ENCODE measurements at regions of chr12 and their contacts with region 1.

Region 1: GRCh38 chr12:112906712-112907414 is at the start of gene OAS1:
- DNase-seq: peak in 8 of 9 donors; percentile 24 to 49 (median 40)
- ATAC-seq: peak; percentile 83
- H3K4me3 ChIP-seq: peak within 1 kb of the TSS; percentile 68
- H3K4me3 Mint-ChIP-seq: peak within 1 kb of the TSS; percentile 87 to 99 (median 92)
- H3K27ac ChIP-seq: peak within 1 kb of the TSS; percentile 71
- H3K27ac Mint-ChIP-seq: peak within 1 kb of the TSS; percentile 84 to 99 (median 92)
- H3K4me1 ChIP-seq: peaks cover 31 to 62% of the 10 kb centered on the region in 2 donors
- H3K4me1 Mint-ChIP-seq: peaks cover 61 to 92% (median 76%) of the 10 kb centered on the region in 7 donors
- H3K27me3 ChIP-seq: no peaks in the 10 kb centered on the region
- H3K27me3 Mint-ChIP-seq: no peaks in the 10 kb centered on the region
- total RNA-seq, gene OAS1: 5.1 to 169 (median 6.1) TPM

Region 2: DNA sequence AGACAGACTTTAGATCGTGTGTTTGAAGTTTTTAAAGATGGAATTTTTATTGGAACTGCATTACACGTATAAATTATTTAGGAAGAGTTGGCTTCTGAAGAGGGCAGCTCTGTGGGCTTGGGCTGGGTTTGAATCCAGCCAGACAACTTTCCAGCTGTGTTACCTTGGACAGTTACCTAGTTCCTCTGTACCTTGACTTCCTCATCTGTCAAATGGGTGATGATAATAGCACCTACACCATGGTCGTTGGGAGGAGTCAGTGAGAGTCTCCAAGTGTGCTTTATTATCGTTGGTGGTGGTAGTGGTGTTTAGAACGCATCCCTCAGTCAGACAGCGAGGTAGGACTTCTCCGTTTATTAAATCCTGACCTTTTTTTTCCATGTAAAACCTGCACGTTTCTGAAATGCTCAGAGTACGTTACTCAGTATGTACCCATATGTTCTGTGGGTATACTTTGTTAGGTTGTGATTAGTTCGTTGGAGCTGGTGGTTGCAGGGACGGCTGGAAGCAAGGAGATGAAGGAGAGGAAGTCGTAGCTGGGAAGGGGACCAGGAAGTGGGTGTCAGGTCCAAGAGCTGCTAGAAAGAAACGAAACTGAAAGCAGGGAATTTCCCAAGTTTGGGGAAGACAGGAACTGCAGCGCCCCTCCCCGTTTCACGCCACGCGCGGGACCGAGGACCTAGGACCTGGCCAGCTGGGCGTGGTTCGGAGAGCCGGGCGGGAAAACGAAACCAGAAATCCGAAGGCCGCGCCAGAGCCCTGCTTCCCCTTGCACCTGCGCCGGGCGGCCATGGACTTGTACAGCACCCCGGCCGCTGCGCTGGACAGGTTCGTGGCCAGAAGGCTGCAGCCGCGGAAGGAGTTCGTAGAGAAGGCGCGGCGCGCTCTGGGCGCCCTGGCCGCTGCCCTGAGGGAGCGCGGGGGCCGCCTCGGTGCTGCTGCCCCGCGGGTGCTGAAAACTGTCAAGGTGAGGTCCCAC is 31.2 kb after region 1 on chr12 and contains the start of gene OAS3:
- CTCF ChIA-PET with region 1: interaction called, 3 read pairs
- POLR2A ChIA-PET with region 1: interaction called, 13 read pairs
- intact Hi-C with region 1: loop called (anchors 1 kb)
- DNase-seq: peak; percentile 31 to 79 (median 50)
- ATAC-seq: peak; percentile 84
- H3K4me3 ChIP-seq: peak within 1 kb of the TSS; percentile 78
- H3K4me3 Mint-ChIP-seq: peak within 1 kb of the TSS; percentile 85 to 100 (median 93)
- H3K27ac ChIP-seq: peak within 1 kb of the TSS; percentile 82
- H3K27ac Mint-ChIP-seq: peak within 1 kb of the TSS; percentile 90 to 97 (median 95)
- H3K4me1 ChIP-seq: peaks cover 18 to 19% of the 10 kb centered on the region in 2 donors
- H3K4me1 Mint-ChIP-seq: peaks cover 22 to 61% (median 31%) of the 10 kb centered on the region in 7 donors
- H3K27me3 ChIP-seq: no peaks in the 10 kb centered on the region
- H3K27me3 Mint-ChIP-seq: no peaks in the 10 kb centered on the region
- total RNA-seq, gene OAS3: 17.8 to 264 (median 21.6) TPM

Region 3: GRCh38 chr12:112978163-112979040 is 71.5 kb after region 1 on chr12 and contains the start of gene OAS2:
- CTCF ChIA-PET with region 1: interaction called, 10 read pairs
- POLR2A ChIA-PET with region 1: interaction called, 43 read pairs
- intact Hi-C with region 1: loop called (anchors 1 kb)
- DNase-seq: peak; percentile 35 to 89 (median 85)
- ATAC-seq: peak; percentile 97
- H3K4me3 ChIP-seq: peak within 1 kb of the TSS; percentile 99
- H3K4me3 Mint-ChIP-seq: peak within 1 kb of the TSS; percentile 87 to 100 (median 96)
- H3K27ac ChIP-seq: peak within 1 kb of the TSS; percentile 89
- H3K27ac Mint-ChIP-seq: peak within 1 kb of the TSS; percentile 97 to 100 (median 99)
- H3K4me1 ChIP-seq: peaks cover 34 to 37% of the 10 kb centered on the region in 2 donors
- H3K4me1 Mint-ChIP-seq: peaks cover 30 to 59% (median 42%) of the 10 kb centered on the region in 7 donors
- H3K27me3 ChIP-seq: no peaks in the 10 kb centered on the region
- H3K27me3 Mint-ChIP-seq: no peaks in the 10 kb centered on the region
- total RNA-seq, gene OAS2: 29.9 to 238 (median 66.0) TPM

Region 4: DNA sequence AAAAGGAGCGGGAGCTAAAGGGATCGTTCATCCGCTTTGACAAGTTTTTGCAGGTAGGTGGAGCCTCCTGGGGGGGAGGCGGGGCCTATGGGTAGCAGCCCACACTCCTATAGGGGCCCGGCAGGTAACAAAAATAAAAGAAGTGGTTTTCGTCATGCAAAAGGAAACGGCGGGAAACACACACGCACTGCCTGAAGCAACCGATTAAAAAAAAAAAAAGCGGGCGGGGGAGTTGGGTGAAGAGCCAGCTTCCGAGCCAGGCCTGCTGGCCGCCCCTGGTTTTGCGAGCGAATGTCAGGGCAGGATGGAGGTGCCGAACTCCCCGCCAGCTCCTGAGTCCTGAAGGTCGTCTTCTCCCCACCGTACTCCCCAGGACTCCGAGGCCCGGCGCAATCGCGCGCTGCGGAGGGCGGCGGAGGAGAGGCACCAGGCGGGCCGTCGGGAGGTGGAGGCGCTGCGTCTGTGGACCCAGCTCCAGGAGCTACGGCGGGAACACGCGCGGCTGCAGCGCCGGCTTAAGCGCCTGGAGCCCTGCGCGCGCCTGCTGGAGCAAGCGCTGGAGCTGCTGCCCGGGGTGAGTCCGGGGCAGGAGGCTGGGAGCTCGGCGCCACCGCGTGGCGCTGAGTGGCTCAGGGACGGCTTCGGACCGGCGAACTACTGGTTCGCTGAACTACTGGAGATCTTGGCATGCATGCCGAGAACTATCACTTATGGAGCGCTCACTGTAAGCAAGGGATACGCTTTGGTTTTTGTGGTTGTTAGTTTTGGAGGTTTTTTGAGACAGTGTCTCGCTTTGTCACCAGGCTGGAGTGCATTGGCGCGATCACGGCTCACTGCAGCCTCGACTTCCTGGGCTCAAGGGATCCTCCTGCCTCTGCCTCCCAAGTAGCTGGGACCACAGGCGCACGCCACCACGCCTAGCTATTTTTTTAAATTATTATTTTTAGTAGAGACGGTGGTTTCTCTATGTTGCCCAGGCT is 246.3 kb after region 1 on chr12:
- CTCF ChIA-PET with region 1: no interaction called
- POLR2A ChIA-PET with region 1: no interaction called
- intact Hi-C with region 1: loop called in 1 of 2 experiments (anchors 10 kb)
- DNase-seq: peak; percentile 36 to 86 (median 80)
- ATAC-seq: peak; percentile 94
- H3K4me3 ChIP-seq: peak overlapping the region; percentile 75
- H3K4me3 Mint-ChIP-seq: peak overlapping the region; percentile 76 to 88 (median 86)
- H3K27ac ChIP-seq: no peak overlapping the region
- H3K27ac Mint-ChIP-seq: peak overlapping the region in 6 of 9 donors; percentile 76 to 93 (median 85)
- H3K4me1 ChIP-seq: peaks cover 0 to 19% of the 10 kb centered on the region in 2 donors
- H3K4me1 Mint-ChIP-seq: peaks cover 0 to 27% (median 25%) of the 10 kb centered on the region in 7 donors
- H3K27me3 ChIP-seq: no peaks in the 10 kb centered on the region
- H3K27me3 Mint-ChIP-seq: peaks cover 0 to 36% (median 0%) of the 10 kb centered on the region in 5 donors